Colonic mucosa (tissue), 4 donors: ENCODE measurements at regions of chr2 and their contacts with region 1.

Region 1: GRCh38 chr2:202178342-202178958 is 59.9 kb downstream of the SUMO1 start:
- DNase-seq: peak; percentile 70
- H3K4me3 ChIP-seq: no peak overlapping the region
- H3K27ac ChIP-seq: no peak overlapping the region
- H3K4me1 ChIP-seq: no peaks in the 10 kb centered on the region
- H3K27me3 ChIP-seq: no peaks in the 10 kb centered on the region
- CTCF ChIP-seq: peak; percentile 84

Region 2: GRCh38 chr2:201795607-201796477 is 382.6 kb before region 1 on chr2:
- intact Hi-C with region 1: loop called (anchors 5 kb)
- DNase-seq: no peak
- H3K4me3 ChIP-seq: no peak overlapping the region
- H3K27ac ChIP-seq: no peak overlapping the region
- H3K4me1 ChIP-seq: no peaks in the 10 kb centered on the region
- H3K27me3 ChIP-seq: peaks cover 4% of the 10 kb centered on the region
- CTCF ChIP-seq: peak; percentile 40

Region 3: DNA sequence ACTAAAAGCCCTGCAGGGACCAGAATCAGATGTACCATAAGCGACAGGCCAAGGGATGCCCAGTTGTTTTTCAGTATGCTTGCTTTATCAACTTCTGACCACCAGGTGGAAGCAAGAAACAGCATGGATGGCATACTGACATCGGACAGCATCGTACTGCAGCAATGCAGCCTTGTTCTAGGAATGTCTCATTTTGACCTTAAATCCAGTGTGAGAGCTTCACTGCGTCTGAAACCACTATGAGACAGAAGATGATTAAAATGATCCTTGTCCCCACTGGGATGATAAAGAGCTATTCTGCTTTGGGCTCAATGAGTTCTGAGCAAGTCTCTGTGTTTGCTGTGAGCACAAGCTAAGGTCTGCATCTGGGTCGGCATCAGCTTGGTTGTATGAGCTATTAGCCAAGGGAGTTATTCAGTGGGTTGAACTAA is 317.8 kb before region 1 on chr2:
- intact Hi-C with region 1: loop called (anchors 2 kb)
- DNase-seq: peak; percentile 46
- H3K4me3 ChIP-seq: no peak overlapping the region
- H3K27ac ChIP-seq: no peak overlapping the region
- H3K4me1 ChIP-seq: no peaks in the 10 kb centered on the region
- H3K27me3 ChIP-seq: no peaks in the 10 kb centered on the region
- CTCF ChIP-seq: peak; percentile 70

Region 4: GRCh38 chr2:201971531-201972228 is 206.8 kb before region 1 on chr2:
- intact Hi-C with region 1: loop called (anchors 10 kb)
- DNase-seq: no peak
- H3K4me3 ChIP-seq: no peak overlapping the region
- H3K27ac ChIP-seq: no peak overlapping the region
- H3K4me1 ChIP-seq: no peaks in the 10 kb centered on the region
- H3K27me3 ChIP-seq: no peaks in the 10 kb centered on the region
- CTCF ChIP-seq: no peak

Region 5: GRCh38 chr2:202033321-202034248 is 144.9 kb before region 1 on chr2 and contains the start of gene FZD7:
- intact Hi-C with region 1: loop called (anchors 10 kb)
- DNase-seq: peak; percentile 94
- H3K4me3 ChIP-seq: peak within 1 kb of the TSS; percentile 62
- H3K27ac ChIP-seq: peak within 1 kb of the TSS; percentile 82
- H3K4me1 ChIP-seq: peaks cover 8% of the 10 kb centered on the region
- H3K27me3 ChIP-seq: peaks cover 17% of the 10 kb centered on the region
- CTCF ChIP-seq: no peak
- total RNA-seq, gene FZD7: 2.3 to 13.9 TPM

Region 6: DNA sequence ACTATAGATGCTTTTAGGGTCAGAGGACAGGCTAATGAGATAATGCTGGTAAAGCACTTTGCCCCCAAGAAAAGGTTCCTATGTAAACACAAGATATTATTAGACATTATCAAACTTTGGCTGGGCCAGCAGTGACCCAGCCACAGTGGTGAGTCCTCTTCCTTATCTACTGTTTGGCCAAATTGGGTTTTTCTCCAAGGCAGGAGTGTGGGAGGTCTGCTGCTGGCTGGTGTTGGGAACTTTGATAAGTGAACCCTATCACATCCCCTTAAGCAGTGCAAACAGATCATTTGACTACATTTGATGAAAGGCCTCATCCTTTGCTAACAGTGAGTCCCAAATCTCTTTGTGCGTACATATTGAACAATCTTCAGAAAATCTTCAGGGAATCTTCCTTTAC is 128.6 kb before region 1 on chr2:
- intact Hi-C with region 1: no loop called
- DNase-seq: no peak
- H3K4me3 ChIP-seq: no peak overlapping the region
- H3K27ac ChIP-seq: no peak overlapping the region
- H3K4me1 ChIP-seq: no peaks in the 10 kb centered on the region
- H3K27me3 ChIP-seq: no peaks in the 10 kb centered on the region
- CTCF ChIP-seq: no peak

Region 7: GRCh38 chr2:202104278-202104870 is 74.1 kb before region 1 on chr2:
- intact Hi-C with region 1: loop called (anchors 10 kb)
- DNase-seq: peak; percentile 43
- H3K4me3 ChIP-seq: no peak overlapping the region
- H3K27ac ChIP-seq: no peak overlapping the region
- H3K4me1 ChIP-seq: no peaks in the 10 kb centered on the region
- H3K27me3 ChIP-seq: no peaks in the 10 kb centered on the region
- CTCF ChIP-seq: peak; percentile 45

Region 8: DNA sequence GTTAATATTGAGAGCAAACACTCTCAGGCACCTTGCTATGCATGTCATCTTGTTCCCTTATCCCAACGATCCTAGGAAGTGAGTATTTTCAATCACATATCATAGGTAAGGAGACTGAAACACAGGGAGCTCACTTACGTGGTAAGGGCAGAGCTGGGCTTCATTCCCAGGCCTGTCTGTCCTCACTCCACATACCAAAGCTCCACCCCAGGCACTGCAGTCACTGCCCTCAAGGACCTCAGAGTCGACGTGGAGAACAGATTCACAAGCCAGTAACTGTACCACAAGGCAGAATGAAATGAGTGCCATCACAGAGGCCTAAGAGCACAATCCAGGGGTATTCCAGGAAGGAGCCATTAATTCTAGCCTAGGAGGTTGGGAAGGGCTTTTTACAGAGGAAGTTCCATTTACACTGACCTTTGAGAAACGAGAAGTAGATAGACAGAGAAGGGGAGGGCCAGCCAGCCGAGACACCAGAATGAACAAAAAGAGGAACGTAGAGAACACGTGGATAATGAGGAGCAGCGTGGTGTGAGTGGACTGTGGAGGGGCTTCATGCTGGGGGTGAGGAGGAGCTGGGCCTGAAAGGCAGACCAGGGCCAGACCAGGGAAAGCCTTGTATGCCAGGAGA is 56.8 kb before region 1 on chr2:
- intact Hi-C with region 1: no loop called
- DNase-seq: no peak
- H3K4me3 ChIP-seq: no peak overlapping the region
- H3K27ac ChIP-seq: no peak overlapping the region
- H3K4me1 ChIP-seq: no peaks in the 10 kb centered on the region
- H3K27me3 ChIP-seq: no peaks in the 10 kb centered on the region
- CTCF ChIP-seq: no peak

Region 9: DNA sequence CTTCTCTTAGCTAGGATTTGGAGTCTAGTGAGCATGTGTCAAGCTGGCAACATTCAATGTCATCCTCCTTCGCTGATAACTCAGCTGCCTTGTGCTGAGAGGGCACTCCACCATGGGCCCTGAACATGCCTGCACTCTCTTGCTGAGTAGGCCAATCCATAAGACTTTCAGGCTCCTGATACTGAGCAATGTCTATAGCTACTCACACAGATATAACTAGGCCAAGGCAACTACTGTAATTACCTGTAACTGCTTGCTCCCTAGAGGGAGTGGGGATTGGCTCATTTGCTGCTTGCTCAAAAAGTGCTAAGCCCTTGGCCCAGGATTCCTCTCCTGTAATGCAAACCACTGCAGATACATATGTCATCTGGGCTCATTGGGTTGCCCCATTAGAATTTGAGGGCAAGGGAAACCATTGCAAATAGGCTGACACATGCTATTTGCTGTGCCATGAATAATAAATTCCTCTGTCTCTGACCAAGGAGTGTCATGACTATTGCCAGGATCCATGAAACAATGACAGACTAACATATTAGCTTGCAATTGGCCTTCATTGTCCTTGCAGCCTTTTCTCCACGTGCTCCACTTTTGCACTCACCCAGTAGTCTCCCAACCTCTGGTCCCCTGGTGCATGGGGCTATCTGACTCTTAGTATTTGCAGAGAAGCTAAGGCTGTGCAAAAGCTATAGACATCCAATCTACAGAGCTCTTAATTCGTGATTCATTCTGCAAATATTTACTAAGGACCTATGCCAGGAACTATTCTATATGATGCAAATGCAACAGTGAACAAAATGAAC is 160.8 kb after region 1 on chr2:
- intact Hi-C with region 1: no loop called
- DNase-seq: peak; percentile 33
- H3K4me3 ChIP-seq: no peak overlapping the region
- H3K27ac ChIP-seq: no peak overlapping the region
- H3K4me1 ChIP-seq: no peaks in the 10 kb centered on the region
- H3K27me3 ChIP-seq: no peaks in the 10 kb centered on the region
- CTCF ChIP-seq: no peak